ENCODE measurements at regions of chr19 and their contacts with region 1.

Region 1: GRCh38 chr19:47381653-47382279 is 32.7 kb downstream of the DHX34 start:
- DNase-seq: peak; percentile 59 to 61
- ATAC-seq: peak; percentile 94 to 97 (median 94)
- H3K4me3 ChIP-seq: no peak overlapping the region
- H3K4me3 Mint-ChIP-seq: peak overlapping the region; percentile 82
- H3K27ac ChIP-seq: peak overlapping the region; percentile 1
- H3K27ac Mint-ChIP-seq: peak overlapping the region; percentile 89 to 92
- H3K4me1 ChIP-seq: peaks cover 43% of the 10 kb centered on the region
- H3K4me1 Mint-ChIP-seq: peaks cover 28 to 43% of the 10 kb centered on the region in 2 donors
- H3K27me3 ChIP-seq: no peaks in the 10 kb centered on the region
- H3K27me3 Mint-ChIP-seq: no peaks in the 10 kb centered on the region
- CTCF ChIP-seq: no peak

Region 2: GRCh38 chr19:47336853-47337279 is 44.9 kb before region 1 on chr19:
- intact Hi-C with region 1: no loop called
- DNase-seq: peak in 1 of 2 donors; percentile 36
- ATAC-seq: peak; percentile 74 to 83 (median 78)
- H3K4me3 ChIP-seq: no peak overlapping the region
- H3K4me3 Mint-ChIP-seq: peak overlapping the region; percentile 85
- H3K27ac ChIP-seq: peak overlapping the region; percentile 15
- H3K27ac Mint-ChIP-seq: peak overlapping the region; percentile 81 to 86
- H3K4me1 ChIP-seq: peaks cover 25% of the 10 kb centered on the region
- H3K4me1 Mint-ChIP-seq: peaks cover 8 to 16% of the 10 kb centered on the region in 2 donors
- H3K27me3 ChIP-seq: no peaks in the 10 kb centered on the region
- H3K27me3 Mint-ChIP-seq: no peaks in the 10 kb centered on the region
- CTCF ChIP-seq: no peak

Region 3: GRCh38 chr19:47348819-47349795 is 32.7 kb before region 1 on chr19 and contains the start of gene DHX34:
- intact Hi-C with region 1: loop called (anchors 5 kb)
- DNase-seq: peak; percentile 99 to 100
- ATAC-seq: peak; percentile 97 to 100 (median 98)
- H3K4me3 ChIP-seq: peak within 1 kb of the TSS; percentile 88
- H3K4me3 Mint-ChIP-seq: peak within 1 kb of the TSS; percentile 92
- H3K27ac ChIP-seq: peak within 1 kb of the TSS; percentile 70
- H3K27ac Mint-ChIP-seq: peak within 1 kb of the TSS; percentile 78 to 91
- H3K4me1 ChIP-seq: peaks cover 22% of the 10 kb centered on the region
- H3K4me1 Mint-ChIP-seq: peaks cover 25 to 35% of the 10 kb centered on the region in 2 donors
- H3K27me3 ChIP-seq: no peaks in the 10 kb centered on the region
- H3K27me3 Mint-ChIP-seq: no peaks in the 10 kb centered on the region
- CTCF ChIP-seq: peak; percentile 92
- total RNA-seq, gene DHX34: 19.8 to 25.9 (median 20.0) TPM

Measured in natural killer cell (primary cell).